PC-3 (cell line): ENCODE measurements at regions of chr7 and their contacts with region 1.

Region 1: DNA sequence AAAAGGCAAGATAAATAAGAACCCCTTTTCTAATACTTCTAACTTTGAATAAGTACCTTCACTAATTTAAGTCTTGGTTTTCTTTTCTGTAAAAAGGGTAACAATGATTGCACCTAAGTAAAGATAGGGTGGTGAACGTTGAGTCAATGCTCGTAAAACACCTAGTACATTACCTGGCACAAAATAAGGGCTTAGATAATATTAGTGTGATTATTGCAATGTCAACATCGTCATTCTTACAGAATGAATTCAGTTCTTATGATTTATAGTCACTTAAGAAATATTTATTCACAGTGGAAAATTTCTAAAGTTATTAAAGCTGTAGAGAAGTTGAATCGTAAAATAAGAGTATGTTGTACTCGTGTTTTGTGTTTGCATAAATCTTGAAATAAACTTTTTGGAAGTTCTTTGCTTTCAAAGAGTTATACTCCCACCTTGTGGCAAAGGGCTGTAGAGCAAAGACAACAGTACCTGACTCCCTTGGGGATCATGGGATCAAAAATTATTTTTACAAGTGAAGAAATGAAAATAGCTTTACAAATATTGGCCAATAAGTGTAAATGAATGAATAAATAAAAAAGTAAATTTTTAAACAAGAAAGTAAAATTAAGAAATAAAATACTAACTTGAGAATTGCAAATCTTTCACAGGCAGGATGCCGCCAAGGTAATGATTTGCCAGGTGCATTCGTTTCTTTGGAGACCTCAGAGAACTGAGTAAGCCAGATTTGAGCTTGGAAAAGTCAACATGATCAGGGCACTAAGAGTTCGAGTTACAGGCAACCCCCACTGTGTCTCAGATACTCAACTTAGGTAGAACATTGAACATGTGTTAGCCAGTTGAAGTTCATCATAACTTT is 285.8 kb upstream of the CACNA2D1 start:
- DNase-seq: peak; percentile 76
- ATAC-seq: peak; percentile 69
- H3K4me3 ChIP-seq: no peak overlapping the region
- H3K27ac ChIP-seq: no peak overlapping the region
- H3K4me1 ChIP-seq: peaks cover 6% of the 10 kb centered on the region
- H3K27me3 ChIP-seq: no peaks in the 10 kb centered on the region
- CTCF ChIP-seq: peak; percentile 88

Region 2: GRCh38 chr7:81482600-81483186 is 1246.7 kb before region 1 on chr7:
- CTCF ChIA-PET with region 1: no interaction called
- POLR2A ChIA-PET with region 1: no interaction called
- intact Hi-C with region 1: loop called (anchors 5 kb)
- DNase-seq: peak; percentile 55
- ATAC-seq: peak; percentile 49; the same call in 1 of the 2 replicates
- H3K4me3 ChIP-seq: no peak overlapping the region
- H3K27ac ChIP-seq: no peak overlapping the region
- H3K4me1 ChIP-seq: 0 out of 2 replicates have a peak, but pooled peaks cover 4% of the 10 kb centered on the region
- H3K27me3 ChIP-seq: no peaks in the 10 kb centered on the region
- CTCF ChIP-seq: peak; percentile 70

Region 3: GRCh38 chr7:82156168-82156567 is 573.2 kb before region 1 on chr7:
- CTCF ChIA-PET with region 1: no interaction called
- POLR2A ChIA-PET with region 1: no interaction called
- intact Hi-C with region 1: loop called (anchors 5 kb)
- DNase-seq: no peak
- ATAC-seq: no peak
- H3K4me3 ChIP-seq: no peak overlapping the region
- H3K27ac ChIP-seq: no peak overlapping the region
- H3K4me1 ChIP-seq: no peaks in the 10 kb centered on the region; the same call in 1 of the 2 replicates
- H3K27me3 ChIP-seq: peaks cover 18% of the 10 kb centered on the region; the same call in 1 of the 2 replicates
- CTCF ChIP-seq: no peak

Region 4: GRCh38 chr7:82234457-82235049 is 494.8 kb before region 1 on chr7:
- CTCF ChIA-PET with region 1: no interaction called
- POLR2A ChIA-PET with region 1: no interaction called
- intact Hi-C with region 1: loop called (anchors 1 kb)
- DNase-seq: peak; percentile 60
- ATAC-seq: no peak
- H3K4me3 ChIP-seq: no peak overlapping the region
- H3K27ac ChIP-seq: no peak overlapping the region
- H3K4me1 ChIP-seq: no peaks in the 10 kb centered on the region
- H3K27me3 ChIP-seq: peaks cover 37% of the 10 kb centered on the region
- CTCF ChIP-seq: peak; percentile 77

Region 5: DNA sequence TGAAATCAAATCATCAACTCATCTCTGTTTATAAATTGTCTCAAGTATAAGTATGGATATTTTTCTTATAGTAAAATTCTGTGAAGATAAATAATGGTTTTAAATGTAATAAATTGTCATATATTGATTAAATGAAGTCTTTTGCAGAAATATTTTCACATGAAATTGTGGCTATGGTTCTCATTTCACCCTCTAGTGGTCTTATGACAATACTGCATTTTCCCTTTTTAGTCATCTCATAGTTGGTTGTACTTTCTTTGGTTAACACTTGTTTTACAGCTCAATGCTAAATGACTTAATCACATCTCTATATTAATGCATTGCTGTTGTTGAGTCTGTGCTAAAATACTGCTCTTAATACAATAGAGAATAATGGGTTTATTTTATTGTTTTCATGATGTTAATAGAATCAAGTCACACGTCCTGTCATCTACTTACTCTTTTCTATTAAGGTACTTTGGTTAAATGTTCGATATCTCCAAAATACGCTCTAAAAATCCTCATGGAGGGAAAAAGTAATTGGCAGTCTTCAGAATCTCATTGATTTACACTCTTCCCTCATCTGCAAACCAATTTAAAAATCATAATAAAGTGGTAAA is 247.8 kb before region 1 on chr7:
- CTCF ChIA-PET with region 1: no interaction called
- POLR2A ChIA-PET with region 1: no interaction called
- intact Hi-C with region 1: loop called (anchors 5 kb)
- DNase-seq: peak; percentile 43
- ATAC-seq: no peak
- H3K4me3 ChIP-seq: no peak overlapping the region
- H3K27ac ChIP-seq: no peak overlapping the region
- H3K4me1 ChIP-seq: no peaks in the 10 kb centered on the region
- H3K27me3 ChIP-seq: peaks cover 7% of the 10 kb centered on the region
- CTCF ChIP-seq: peak; percentile 69

Region 6: DNA sequence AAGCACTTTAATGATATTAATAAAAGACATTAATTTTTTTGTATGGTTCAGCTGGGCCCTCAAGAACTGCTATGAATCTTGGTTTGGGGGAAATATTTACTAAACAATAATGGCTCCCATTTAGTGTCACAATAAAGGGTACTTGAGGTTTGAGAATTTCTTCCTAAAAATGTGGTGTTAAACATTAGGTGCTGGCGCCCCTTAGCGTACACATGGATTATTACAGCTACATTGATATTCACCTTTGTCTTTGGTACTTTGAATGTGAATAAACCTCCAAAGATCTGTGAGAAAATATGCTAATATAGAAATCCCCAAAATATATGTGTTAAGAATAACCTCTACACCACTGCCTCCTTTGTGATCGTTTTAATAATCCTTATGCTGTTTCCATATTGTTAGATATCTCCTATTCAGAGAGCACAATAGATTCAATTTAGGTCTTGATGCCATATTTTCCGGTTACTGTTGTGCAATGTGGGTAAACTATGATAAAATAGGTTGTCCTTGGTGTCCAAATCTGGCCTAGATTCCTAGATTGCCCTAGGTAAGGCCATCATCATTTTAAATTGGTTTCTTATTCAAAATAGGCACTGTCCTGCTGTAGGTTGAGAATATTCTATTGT is 124.0 kb before region 1 on chr7:
- CTCF ChIA-PET with region 1: interaction called, 10 read pairs
- POLR2A ChIA-PET with region 1: interaction called, 7 read pairs
- intact Hi-C with region 1: loop called (anchors 1 kb)
- DNase-seq: peak; percentile 59
- ATAC-seq: no peak
- H3K4me3 ChIP-seq: no peak overlapping the region
- H3K27ac ChIP-seq: no peak overlapping the region
- H3K4me1 ChIP-seq: no peaks in the 10 kb centered on the region
- H3K27me3 ChIP-seq: no peaks in the 10 kb centered on the region; the same call in 1 of the 2 replicates
- CTCF ChIP-seq: peak; percentile 82